Heart left ventricle (tissue), 16 donors: ENCODE measurements at regions of chr16 and their contacts with region 1.

Region 1: DNA sequence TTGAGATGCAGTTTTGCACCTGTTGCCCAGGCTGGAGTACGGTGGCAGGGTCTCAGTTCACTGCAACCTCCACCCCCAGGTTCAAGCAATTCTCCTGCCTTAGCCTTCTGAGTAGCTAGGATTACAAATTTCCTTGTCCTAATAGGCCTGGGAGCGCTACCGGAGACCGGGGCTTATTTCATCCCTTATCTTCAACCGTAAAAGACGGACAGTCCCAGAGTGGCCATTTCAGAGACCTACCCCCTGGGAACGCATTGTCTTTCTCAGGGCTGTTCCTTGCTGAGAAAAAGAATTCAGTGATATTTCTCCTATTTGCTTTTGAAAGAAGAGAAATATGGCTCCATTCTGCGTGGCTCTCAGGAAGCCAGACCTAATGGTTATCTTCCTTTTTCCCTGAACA is 39.6 kb upstream of the GINS3 start:
- DNase-seq: no peak
- ATAC-seq: no peak
- H3K4me3 ChIP-seq: no peak overlapping the region
- H3K27ac ChIP-seq: no peak overlapping the region
- H3K4me1 ChIP-seq: peaks cover 0 to 11% (median 4%) of the 10 kb centered on the region in 12 donors
- H3K27me3 ChIP-seq: peaks cover 0 to 15% (median 0%) of the 10 kb centered on the region in 9 donors
- CTCF ChIP-seq: no peak
- POLR2A ChIP-seq: no peak

Region 2: GRCh38 chr16:58384113-58385055 is 31.7 kb after region 1 on chr16:
- intact Hi-C with region 1: loop called in 1 of 10 experiments (anchors 5 kb)
- DNase-seq: no peak
- ATAC-seq: no peak
- H3K4me3 ChIP-seq: no peak overlapping the region
- H3K27ac ChIP-seq: no peak overlapping the region
- H3K4me1 ChIP-seq: no peaks in the 10 kb centered on the region
- H3K27me3 ChIP-seq: no peaks in the 10 kb centered on the region
- CTCF ChIP-seq: no peak
- POLR2A ChIP-seq: no peak

Region 3: GRCh38 chr16:58392215-58393137 is 39.8 kb after region 1 on chr16 and contains the start of gene GINS3:
- intact Hi-C with region 1: loop called in 7 of 10 experiments (anchors 2 to 5 kb)
- DNase-seq: peak; percentile 92 to 94 (median 93)
- ATAC-seq: peak; percentile 94 to 99 (median 98)
- H3K4me3 ChIP-seq: peak within 1 kb of the TSS; percentile 66 to 96 (median 88)
- H3K27ac ChIP-seq: peak within 1 kb of the TSS; percentile 59 to 95 (median 87)
- H3K4me1 ChIP-seq: peaks cover 0 to 16% (median 9%) of the 10 kb centered on the region in 12 donors
- H3K27me3 ChIP-seq: no peaks in the 10 kb centered on the region
- CTCF ChIP-seq: no peak
- POLR2A ChIP-seq: peak in 1 of 2 donors; percentile 19
- total RNA-seq, gene GINS3: 3.9 to 8.7 (median 7.1) TPM

Region 4: GRCh38 chr16:58409316-58409973 is 56.8 kb after region 1 on chr16:
- intact Hi-C with region 1: loop called in 3 of 10 experiments (anchors 5 kb)
- DNase-seq: peak in 4 of 5 donors; percentile 46 to 75 (median 63)
- ATAC-seq: peak; percentile 48 to 81 (median 76)
- H3K4me3 ChIP-seq: no peak overlapping the region
- H3K27ac ChIP-seq: peak overlapping the region; percentile 31 to 98 (median 82)
- H3K4me1 ChIP-seq: peaks cover 0 to 49% (median 8%) of the 10 kb centered on the region in 12 donors
- H3K27me3 ChIP-seq: no peaks in the 10 kb centered on the region
- CTCF ChIP-seq: no peak
- POLR2A ChIP-seq: no peak

Region 5: GRCh38 chr16:58563235-58563634 is 210.5 kb after region 1 on chr16:
- intact Hi-C with region 1: no loop called
- DNase-seq: no peak
- ATAC-seq: no peak
- H3K4me3 ChIP-seq: no peak overlapping the region
- H3K27ac ChIP-seq: no peak overlapping the region
- H3K4me1 ChIP-seq: peaks cover 0 to 2% (median 0%) of the 10 kb centered on the region in 12 donors
- H3K27me3 ChIP-seq: no peaks in the 10 kb centered on the region
- CTCF ChIP-seq: no peak
- POLR2A ChIP-seq: no peak